ENCODE measurements at regions of chr1 and their contacts with region 1.

Region 1: GRCh38 chr1:200488375-200489165 is 78.7 kb upstream of the ZNF281 start:
- DNase-seq: peak; percentile 57
- H3K4me3 ChIP-seq: no peak overlapping the region
- H3K27ac ChIP-seq: no peak overlapping the region
- H3K4me1 ChIP-seq: peaks cover 14% of the 10 kb centered on the region
- H3K27me3 ChIP-seq: no peaks in the 10 kb centered on the region
- CTCF ChIP-seq: peak; percentile 82 to 86

Region 2: DNA sequence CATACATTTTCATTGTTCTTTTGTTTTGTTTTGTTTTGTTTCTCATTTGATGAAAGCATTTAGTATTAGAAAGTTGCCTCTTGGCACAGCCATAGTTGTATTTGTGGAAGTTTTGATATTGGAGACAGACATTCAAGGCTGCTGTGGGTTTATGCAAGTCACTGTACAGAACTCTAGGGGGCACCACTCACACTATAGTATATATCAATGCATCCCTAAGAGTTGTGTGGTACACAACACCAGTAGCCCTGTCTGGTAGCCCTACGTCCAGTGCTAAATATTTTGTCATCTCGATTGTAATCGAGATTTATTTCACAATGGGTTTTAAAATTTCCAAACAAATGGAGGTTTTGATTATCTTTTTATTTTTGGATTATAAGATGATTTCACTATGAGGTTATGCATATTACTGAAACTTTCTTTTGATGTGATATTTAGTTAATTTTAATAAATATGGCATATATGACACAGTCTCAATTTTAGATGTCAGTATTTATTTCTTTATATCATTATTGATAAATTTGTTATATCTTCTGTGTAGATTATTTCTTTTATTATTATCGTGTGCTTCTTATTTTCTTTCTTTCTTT is 348.8 kb before region 1 on chr1:
- CTCF ChIA-PET with region 1: no interaction called
- dilution Hi-C with region 1: no loop called
- in situ Hi-C with region 1: loop called (anchors 10 to 25 kb)
- intact Hi-C with region 1: loop called (anchors 1 kb)
- DNase-seq: peak; percentile 32
- H3K4me3 ChIP-seq: no peak overlapping the region
- H3K27ac ChIP-seq: no peak overlapping the region
- H3K4me1 ChIP-seq: no peaks in the 10 kb centered on the region
- H3K27me3 ChIP-seq: no peaks in the 10 kb centered on the region
- CTCF ChIP-seq: peak; percentile 72 to 78

Region 3: GRCh38 chr1:200279810-200280411 is 208.7 kb before region 1 on chr1:
- CTCF ChIA-PET with region 1: interaction called, 7 read pairs
- dilution Hi-C with region 1: loop called (anchors 25 kb)
- in situ Hi-C with region 1: loop called (anchors 5 kb)
- intact Hi-C with region 1: loop called (anchors 1 kb)
- DNase-seq: peak; percentile 53
- H3K4me3 ChIP-seq: no peak overlapping the region
- H3K27ac ChIP-seq: no peak overlapping the region
- H3K4me1 ChIP-seq: no peaks in the 10 kb centered on the region
- H3K27me3 ChIP-seq: no peaks in the 10 kb centered on the region
- CTCF ChIP-seq: peak; percentile 78

Region 4: GRCh38 chr1:200379431-200379755 is 109.2 kb before region 1 on chr1:
- CTCF ChIA-PET with region 1: no interaction called
- dilution Hi-C with region 1: no loop called
- in situ Hi-C with region 1: no loop called
- intact Hi-C with region 1: loop called (anchors 1 kb)
- DNase-seq: peak; percentile 88
- H3K4me3 ChIP-seq: no peak overlapping the region
- H3K27ac ChIP-seq: peak overlapping the region; percentile 58
- H3K4me1 ChIP-seq: peaks cover 59% of the 10 kb centered on the region
- H3K27me3 ChIP-seq: no peaks in the 10 kb centered on the region
- CTCF ChIP-seq: no peak

Region 5: DNA sequence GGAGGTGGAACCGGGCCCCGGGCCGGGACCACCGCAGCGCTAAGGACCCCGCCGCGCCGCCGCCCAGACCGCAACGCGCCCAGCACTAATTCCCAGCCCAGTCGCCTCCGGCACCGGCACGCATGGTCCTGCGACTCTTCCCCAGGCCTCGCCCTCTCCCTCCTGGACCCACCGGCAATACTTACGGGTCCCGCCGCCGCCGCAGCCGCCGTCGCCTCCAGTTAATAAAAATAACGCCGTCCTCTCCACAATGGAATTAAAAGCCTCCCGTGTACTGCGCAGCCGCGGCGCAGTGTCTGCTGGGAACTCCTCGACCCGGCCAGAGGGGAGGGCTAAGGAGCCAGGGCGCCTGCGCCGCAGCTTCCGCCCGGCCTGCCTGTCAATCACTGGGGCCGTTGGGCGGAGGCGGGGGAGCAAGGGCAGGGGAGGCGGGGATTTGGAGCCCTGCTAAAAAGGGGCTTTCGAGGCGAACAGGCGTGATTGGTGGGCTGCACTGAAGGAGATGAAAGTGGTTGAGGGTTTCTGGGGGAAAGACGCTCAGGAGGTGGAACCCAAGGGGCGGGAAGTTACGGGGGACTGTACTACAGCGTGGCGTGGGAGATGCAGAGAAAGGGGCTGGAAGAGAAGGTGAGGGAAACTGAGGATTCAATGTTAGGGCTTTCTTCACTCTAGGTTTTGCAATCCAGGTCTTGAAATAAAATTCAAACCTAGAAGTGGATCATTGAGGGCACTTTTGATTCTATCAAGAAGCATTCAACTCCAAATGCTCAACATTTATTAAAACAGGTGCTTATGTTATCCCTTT is 78.6 kb before region 1 on chr1 and contains the start of gene ZNF281:
- CTCF ChIA-PET with region 1: no interaction called
- dilution Hi-C with region 1: no loop called
- in situ Hi-C with region 1: no loop called
- intact Hi-C with region 1: loop called (anchors 1 kb)
- DNase-seq: peak; percentile 90
- H3K4me3 ChIP-seq: peak within 1 kb of the TSS; percentile 91 to 98 (median 94)
- H3K27ac ChIP-seq: peak within 1 kb of the TSS; percentile 78
- H3K4me1 ChIP-seq: peaks cover 46% of the 10 kb centered on the region
- H3K27me3 ChIP-seq: no peaks in the 10 kb centered on the region
- CTCF ChIP-seq: no peak
- total RNA-seq, gene ZNF281: 27.5 to 42.2 TPM

Region 6: GRCh38 chr1:200415693-200416593 is 72.6 kb before region 1 on chr1:
- CTCF ChIA-PET with region 1: interaction called, 3 read pairs
- dilution Hi-C with region 1: no loop called
- in situ Hi-C with region 1: no loop called
- intact Hi-C with region 1: loop called (anchors 1 kb)
- DNase-seq: peak; percentile 94
- H3K4me3 ChIP-seq: peak overlapping the region in 2 of 3 experiments; percentile 11 to 19
- H3K27ac ChIP-seq: peak overlapping the region; percentile 99
- H3K4me1 ChIP-seq: peaks cover 25% of the 10 kb centered on the region
- H3K27me3 ChIP-seq: no peaks in the 10 kb centered on the region
- CTCF ChIP-seq: no peak

Region 7: DNA sequence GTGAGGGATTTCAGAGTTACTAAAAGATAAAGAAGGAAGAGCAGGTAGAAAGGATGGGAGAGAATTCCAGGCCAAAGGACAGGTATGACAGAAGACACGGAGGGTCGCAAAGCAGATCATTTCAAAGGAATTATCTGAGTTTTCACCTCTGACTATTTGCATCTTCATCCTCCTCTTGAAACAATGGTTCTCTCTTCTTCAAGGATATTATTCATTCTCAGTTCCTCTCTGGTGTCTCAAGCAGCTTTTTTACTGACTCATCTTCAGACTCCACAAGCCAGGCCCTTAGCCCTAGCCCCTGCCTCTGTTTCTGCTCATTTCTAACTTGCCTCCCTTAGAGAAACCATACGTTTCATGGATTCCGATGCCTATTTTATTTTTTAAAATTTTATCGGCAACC is 166.1 kb after region 1 on chr1:
- CTCF ChIA-PET with region 1: no interaction called
- dilution Hi-C with region 1: no loop called
- in situ Hi-C with region 1: no loop called
- intact Hi-C with region 1: no loop called
- DNase-seq: peak; percentile 62
- H3K4me3 ChIP-seq: no peak overlapping the region
- H3K27ac ChIP-seq: peak overlapping the region; percentile 89
- H3K4me1 ChIP-seq: peaks cover 32% of the 10 kb centered on the region
- H3K27me3 ChIP-seq: no peaks in the 10 kb centered on the region
- CTCF ChIP-seq: no peak

Measured in mammary epithelial cell (primary cell).